ENCODE measurements at regions of chr1 and their contacts with region 1.

Region 1: GRCh38 chr1:117534995-117535467 is 70.8 kb upstream of the TENT5C start:
- DNase-seq: peak in 13 of 14 experiments; percentile 2 to 82 (median 18)
- ATAC-seq: peak; percentile 95
- H3K4me3 ChIP-seq: no peak overlapping the region
- H3K4me3 Mint-ChIP-seq: no peak overlapping the region
- H3K27ac ChIP-seq: no peak overlapping the region
- H3K27ac Mint-ChIP-seq: no peak overlapping the region
- H3K4me1 ChIP-seq: peaks cover 16% of the 10 kb centered on the region
- H3K4me1 Mint-ChIP-seq: no peaks in the 10 kb centered on the region
- H3K27me3 ChIP-seq: no peaks in the 10 kb centered on the region
- H3K27me3 Mint-ChIP-seq: no peaks in the 10 kb centered on the region
- CTCF ChIP-seq: peak; percentile 64

Region 2: DNA sequence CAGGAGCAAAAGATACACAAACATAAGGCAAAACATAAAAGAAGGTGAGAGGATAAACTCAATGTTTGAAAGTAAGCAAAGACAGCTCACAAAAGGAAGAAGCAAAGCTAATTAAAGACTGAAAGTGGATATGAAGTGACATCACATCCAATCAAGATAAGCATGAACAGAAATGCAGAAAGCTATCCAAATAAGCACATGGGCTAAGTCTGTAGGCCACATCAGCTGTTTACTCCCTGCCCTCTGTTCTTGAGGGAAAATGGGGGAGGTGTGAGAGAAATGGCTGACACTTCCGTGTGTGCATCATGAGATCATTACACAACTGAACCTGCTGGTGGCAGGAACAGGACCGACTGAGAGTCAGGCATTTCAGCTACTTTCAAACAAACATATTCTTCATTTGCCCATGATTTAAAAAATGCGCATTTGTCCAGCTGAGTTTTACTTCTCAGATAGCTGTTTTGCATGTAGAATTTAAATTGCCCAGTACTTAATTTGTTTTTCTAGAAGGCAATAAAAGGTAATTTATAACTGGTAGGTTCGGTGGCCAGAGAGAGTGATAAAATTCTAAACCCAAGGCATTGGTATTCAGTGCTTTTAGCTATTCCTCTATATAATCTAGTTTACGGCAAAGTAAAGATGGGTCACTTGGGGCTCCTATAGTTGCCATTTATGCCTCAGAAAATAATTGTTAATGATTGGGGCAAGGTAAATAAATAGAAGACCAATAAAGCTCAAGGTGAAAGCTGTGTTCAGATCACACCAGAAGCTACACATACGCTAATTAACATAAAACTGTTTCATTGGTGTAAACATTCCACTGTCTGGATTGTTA is 194.9 kb before region 1 on chr1:
- CTCF ChIA-PET with region 1: no interaction called
- POLR2A ChIA-PET with region 1: interaction called, 3 read pairs
- intact Hi-C with region 1: loop called in 1 of 2 experiments (anchors 1 kb)
- DNase-seq: peak in 5 of 14 experiments; percentile 11 to 71 (median 60)
- ATAC-seq: peak; percentile 89
- H3K4me3 ChIP-seq: no peak overlapping the region
- H3K4me3 Mint-ChIP-seq: no peak overlapping the region
- H3K27ac ChIP-seq: no peak overlapping the region
- H3K27ac Mint-ChIP-seq: peak overlapping the region; percentile 66
- H3K4me1 ChIP-seq: no peaks in the 10 kb centered on the region
- H3K4me1 Mint-ChIP-seq: peaks cover 24% of the 10 kb centered on the region
- H3K27me3 ChIP-seq: no peaks in the 10 kb centered on the region
- H3K27me3 Mint-ChIP-seq: no peaks in the 10 kb centered on the region
- CTCF ChIP-seq: peak; percentile 8

Region 3: GRCh38 chr1:117599286-117600221 is 64.5 kb after region 1 on chr1:
- CTCF ChIA-PET with region 1: no interaction called
- POLR2A ChIA-PET with region 1: no interaction called
- intact Hi-C with region 1: loop called (anchors 2 to 5 kb)
- DNase-seq: no peak
- ATAC-seq: no peak
- H3K4me3 ChIP-seq: no peak overlapping the region
- H3K4me3 Mint-ChIP-seq: no peak overlapping the region
- H3K27ac ChIP-seq: no peak overlapping the region
- H3K27ac Mint-ChIP-seq: no peak overlapping the region
- H3K4me1 ChIP-seq: no peaks in the 10 kb centered on the region
- H3K4me1 Mint-ChIP-seq: peaks cover 5% of the 10 kb centered on the region
- H3K27me3 ChIP-seq: no peaks in the 10 kb centered on the region
- H3K27me3 Mint-ChIP-seq: no peaks in the 10 kb centered on the region
- CTCF ChIP-seq: no peak

Region 4: GRCh38 chr1:117644696-117645311 is 109.8 kb after region 1 on chr1:
- CTCF ChIA-PET with region 1: no interaction called
- POLR2A ChIA-PET with region 1: no interaction called
- intact Hi-C with region 1: no loop called
- DNase-seq: peak in 2 of 14 experiments; percentile 43 to 67
- ATAC-seq: no peak
- H3K4me3 ChIP-seq: no peak overlapping the region
- H3K4me3 Mint-ChIP-seq: no peak overlapping the region
- H3K27ac ChIP-seq: no peak overlapping the region
- H3K27ac Mint-ChIP-seq: no peak overlapping the region
- H3K4me1 ChIP-seq: peaks cover 23% of the 10 kb centered on the region
- H3K4me1 Mint-ChIP-seq: peaks cover 7% of the 10 kb centered on the region
- H3K27me3 ChIP-seq: no peaks in the 10 kb centered on the region
- H3K27me3 Mint-ChIP-seq: peaks cover 16% of the 10 kb centered on the region
- CTCF ChIP-seq: no peak

Region 5: DNA sequence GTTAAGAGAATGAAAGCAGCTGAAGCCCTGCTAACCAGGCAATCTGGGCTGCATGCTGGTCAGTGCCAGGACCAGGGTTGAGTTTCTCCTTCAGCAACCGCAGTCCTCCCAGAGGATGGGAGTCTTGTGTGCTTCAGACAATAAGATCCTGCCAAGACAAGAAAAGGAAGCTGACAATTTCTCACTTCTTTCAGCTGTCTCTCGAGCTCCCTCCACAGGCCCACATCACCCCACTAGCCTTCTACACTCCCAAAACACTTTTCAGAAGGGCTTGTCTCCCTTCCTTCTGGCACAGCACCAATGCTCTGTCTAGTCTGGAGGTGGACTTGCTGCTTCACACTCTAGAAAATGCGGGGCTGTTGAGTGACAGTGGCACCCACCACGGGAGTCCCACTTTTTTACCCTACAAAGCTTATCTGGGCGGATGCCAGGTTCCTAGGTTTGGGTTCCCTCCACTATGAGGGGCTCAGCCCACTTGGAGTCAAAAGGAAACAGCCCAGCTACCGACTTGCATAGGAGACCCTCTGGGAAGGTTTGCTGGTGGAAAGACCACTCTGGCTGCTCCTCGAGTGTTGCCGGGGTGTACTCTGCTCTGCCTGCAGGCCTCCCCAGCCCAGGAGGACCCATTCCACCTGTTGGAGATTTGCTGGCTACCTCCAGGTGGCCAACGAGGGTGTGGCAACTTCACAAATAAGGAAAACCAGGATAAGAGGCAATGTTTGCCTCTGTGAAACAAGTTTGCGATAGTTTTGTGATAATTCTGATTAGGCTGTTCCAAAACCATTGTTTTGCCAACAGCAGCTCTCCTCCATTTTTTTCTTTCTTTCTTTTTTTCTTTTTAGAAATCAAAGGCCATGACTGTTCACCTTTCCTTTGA is 139.7 kb after region 1 on chr1:
- CTCF ChIA-PET with region 1: interaction called, 45 read pairs
- POLR2A ChIA-PET with region 1: interaction called, 7 read pairs
- intact Hi-C with region 1: loop called (anchors 1 kb)
- DNase-seq: peak in 13 of 14 experiments; percentile 39 to 82 (median 57)
- ATAC-seq: peak; percentile 86
- H3K4me3 ChIP-seq: no peak overlapping the region
- H3K4me3 Mint-ChIP-seq: no peak overlapping the region
- H3K27ac ChIP-seq: no peak overlapping the region
- H3K27ac Mint-ChIP-seq: no peak overlapping the region
- H3K4me1 ChIP-seq: peaks cover 13% of the 10 kb centered on the region
- H3K4me1 Mint-ChIP-seq: peaks cover 7% of the 10 kb centered on the region
- H3K27me3 ChIP-seq: no peaks in the 10 kb centered on the region
- H3K27me3 Mint-ChIP-seq: peaks cover 13% of the 10 kb centered on the region
- CTCF ChIP-seq: peak; percentile 61

Region 6: GRCh38 chr1:117753654-117754054 is 218.6 kb after region 1 on chr1:
- CTCF ChIA-PET with region 1: interaction called, 38 read pairs
- POLR2A ChIA-PET with region 1: interaction called, 8 read pairs
- intact Hi-C with region 1: loop called (anchors 1 kb)
- DNase-seq: no peak
- ATAC-seq: no peak
- H3K4me3 ChIP-seq: no peak overlapping the region
- H3K4me3 Mint-ChIP-seq: no peak overlapping the region
- H3K27ac ChIP-seq: no peak overlapping the region
- H3K27ac Mint-ChIP-seq: no peak overlapping the region
- H3K4me1 ChIP-seq: peaks cover 10% of the 10 kb centered on the region
- H3K4me1 Mint-ChIP-seq: peaks cover 5% of the 10 kb centered on the region
- H3K27me3 ChIP-seq: peaks cover 0 to 4% of the 10 kb centered on the region in 2 experiments
- H3K27me3 Mint-ChIP-seq: peaks cover 64% of the 10 kb centered on the region
- CTCF ChIP-seq: no peak

Region 7: DNA sequence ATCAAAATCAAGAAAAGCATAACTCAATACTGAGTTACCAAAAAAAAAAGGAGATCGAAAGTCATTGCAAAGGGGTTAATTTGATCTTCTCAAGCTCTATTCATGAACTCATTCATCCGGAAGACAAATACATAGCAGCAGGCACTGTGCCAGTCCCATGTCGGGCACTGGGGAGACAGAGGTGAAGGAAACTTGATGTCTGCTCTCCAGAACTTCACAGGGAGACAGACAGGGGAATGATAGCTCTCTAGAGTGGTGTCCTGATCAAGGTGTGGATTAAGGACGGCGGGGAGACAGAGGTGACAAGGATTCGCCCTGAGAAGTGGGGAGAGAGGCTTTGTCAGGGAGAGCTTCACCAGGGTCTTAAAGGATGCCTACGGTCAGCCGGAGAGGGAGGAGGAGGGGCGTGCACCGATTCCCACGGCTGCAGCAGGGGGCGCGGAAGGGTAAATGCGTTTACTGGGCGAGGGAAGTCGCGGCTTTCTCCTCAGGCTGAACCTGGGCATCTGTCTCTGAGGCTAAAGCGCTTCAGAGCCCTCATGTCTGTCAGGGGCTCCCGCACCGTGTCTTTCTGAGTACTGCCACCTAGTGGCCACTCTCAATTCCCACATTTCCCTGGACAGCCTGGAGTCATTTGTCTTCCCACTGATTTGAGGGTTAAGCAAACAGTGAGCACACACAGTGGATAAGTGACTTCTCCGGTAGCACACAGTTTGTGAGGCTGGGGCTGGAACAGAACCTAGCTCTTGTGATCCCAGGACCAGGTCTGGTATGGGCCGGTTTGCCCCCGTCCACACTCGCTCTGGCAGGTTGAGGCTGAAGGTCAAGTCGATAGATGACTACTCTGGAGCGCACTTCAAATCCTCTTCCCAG is 223.6 kb after region 1 on chr1:
- CTCF ChIA-PET with region 1: interaction called, 38 read pairs
- POLR2A ChIA-PET with region 1: interaction called, 8 read pairs
- intact Hi-C with region 1: loop called (anchors 1 kb)
- DNase-seq: peak; percentile 48 to 83 (median 56)
- ATAC-seq: peak; percentile 86
- H3K4me3 ChIP-seq: peak overlapping the region; percentile 52
- H3K4me3 Mint-ChIP-seq: peak overlapping the region; percentile 84
- H3K27ac ChIP-seq: no peak overlapping the region
- H3K27ac Mint-ChIP-seq: no peak overlapping the region
- H3K4me1 ChIP-seq: peaks cover 14% of the 10 kb centered on the region
- H3K4me1 Mint-ChIP-seq: peaks cover 10% of the 10 kb centered on the region
- H3K27me3 ChIP-seq: peaks cover 0 to 4% of the 10 kb centered on the region in 2 experiments
- H3K27me3 Mint-ChIP-seq: peaks cover 36% of the 10 kb centered on the region
- CTCF ChIP-seq: peak; percentile 95

Region 8: DNA sequence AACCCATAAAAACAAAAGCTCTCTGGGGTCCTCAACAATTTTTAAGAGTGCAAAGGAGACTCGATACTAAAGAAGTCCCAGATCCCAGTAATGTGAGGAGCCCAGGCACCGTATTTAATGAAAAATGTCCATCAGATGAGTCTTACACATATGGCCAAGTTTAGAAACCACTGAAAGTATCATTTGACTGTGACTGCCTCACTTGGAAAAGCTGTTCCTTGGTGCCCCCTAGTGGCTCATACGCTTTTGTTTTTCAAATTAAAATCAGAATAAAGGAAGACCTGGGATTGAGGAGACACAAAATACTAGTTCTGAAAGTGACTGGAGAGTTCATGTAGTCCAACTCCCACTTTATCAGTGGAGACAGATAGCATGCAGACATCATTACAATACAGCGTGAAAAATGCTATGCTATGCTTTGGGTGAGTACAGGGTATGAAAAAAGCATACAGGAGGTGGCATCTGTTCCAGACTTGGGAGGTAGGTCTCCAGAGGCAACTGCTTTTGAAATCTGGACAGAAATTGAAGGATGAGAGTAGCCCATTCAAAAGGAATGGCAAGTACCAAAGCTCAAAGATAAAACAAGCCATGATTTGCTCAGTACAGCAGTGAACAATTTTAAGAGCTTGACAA is 360.6 kb after region 1 on chr1:
- CTCF ChIA-PET with region 1: interaction called, 3 read pairs
- POLR2A ChIA-PET with region 1: no interaction called
- intact Hi-C with region 1: loop called in 1 of 2 experiments (anchors 1 kb)
- DNase-seq: peak; percentile 8 to 72 (median 38)
- ATAC-seq: peak; percentile 41
- H3K4me3 ChIP-seq: no peak overlapping the region
- H3K4me3 Mint-ChIP-seq: no peak overlapping the region
- H3K27ac ChIP-seq: no peak overlapping the region
- H3K27ac Mint-ChIP-seq: no peak overlapping the region
- H3K4me1 ChIP-seq: no peaks in the 10 kb centered on the region
- H3K4me1 Mint-ChIP-seq: no peaks in the 10 kb centered on the region
- H3K27me3 ChIP-seq: no peaks in the 10 kb centered on the region
- H3K27me3 Mint-ChIP-seq: no peaks in the 10 kb centered on the region
- CTCF ChIP-seq: peak; percentile 91

Measured in CD4-positive, alpha-beta T cell (primary cell).